Aorta (tissue), 5 donors: ENCODE measurements at regions of chr11 and their contacts with region 1.

Region 1: DNA sequence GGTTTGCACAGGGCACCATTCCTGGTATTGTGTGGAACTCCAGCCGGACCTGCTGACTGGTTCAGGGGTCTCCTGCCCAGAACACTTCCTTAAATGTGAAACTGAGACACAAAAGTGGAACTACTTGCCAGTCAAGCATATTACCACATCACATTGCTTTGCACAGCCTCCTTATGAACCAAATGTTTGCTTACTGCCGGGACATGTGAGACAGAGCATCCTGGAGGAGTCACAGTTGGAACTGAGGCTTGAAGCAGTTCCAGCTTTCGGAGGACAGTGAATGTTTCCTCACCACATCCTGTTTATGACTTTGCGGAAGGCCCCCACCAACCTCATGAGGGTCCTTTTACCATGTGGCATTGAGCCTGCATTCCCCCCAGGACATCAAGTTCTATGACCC is 105.8 kb upstream of the ARHGAP42 start:
- DNase-seq: peak in 1 of 2 donors; percentile 32
- ATAC-seq: no peak
- H3K4me3 ChIP-seq: no peak overlapping the region
- H3K27ac ChIP-seq: no peak overlapping the region
- H3K4me1 ChIP-seq: no peaks in the 10 kb centered on the region
- H3K27me3 ChIP-seq: peaks cover 0 to 3% of the 10 kb centered on the region in 2 donors

Region 2: DNA sequence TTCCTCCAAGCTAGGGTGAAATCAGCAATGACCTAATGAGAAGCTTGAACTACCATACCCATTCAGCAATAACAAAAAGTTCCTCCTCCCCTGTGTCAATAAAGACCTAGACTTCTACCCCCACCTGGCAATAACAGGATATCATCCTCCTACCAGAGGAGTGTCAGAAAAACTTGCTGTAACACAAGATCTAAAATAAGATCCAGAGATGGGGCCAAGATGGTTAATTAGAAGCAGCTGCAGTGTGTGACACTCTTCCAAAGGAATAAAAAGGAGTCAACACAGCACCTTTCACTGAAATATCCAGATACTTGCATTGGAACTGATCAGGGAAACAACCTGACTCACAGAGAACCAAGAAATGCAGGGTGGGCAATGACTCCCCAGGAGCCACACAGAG is 21.4 kb after region 1 on chr11:
- intact Hi-C with region 1: no loop called
- DNase-seq: no peak
- ATAC-seq: peak; percentile 50
- H3K4me3 ChIP-seq: no peak overlapping the region
- H3K27ac ChIP-seq: no peak overlapping the region
- H3K4me1 ChIP-seq: no peaks in the 10 kb centered on the region
- H3K27me3 ChIP-seq: no peaks in the 10 kb centered on the region

Region 3: GRCh38 chr11:100681064-100681502 is 99.8 kb after region 1 on chr11:
- intact Hi-C with region 1: loop called in 1 of 2 experiments (anchors 10 kb)
- DNase-seq: peak in 1 of 2 donors; percentile 77
- ATAC-seq: no peak
- H3K4me3 ChIP-seq: no peak overlapping the region
- H3K27ac ChIP-seq: no peak overlapping the region
- H3K4me1 ChIP-seq: no peaks in the 10 kb centered on the region
- H3K27me3 ChIP-seq: no peaks in the 10 kb centered on the region